Lower leg skin (tissue), 4 donors: ENCODE measurements at regions of chr6 and their contacts with region 1.

Region 1: DNA sequence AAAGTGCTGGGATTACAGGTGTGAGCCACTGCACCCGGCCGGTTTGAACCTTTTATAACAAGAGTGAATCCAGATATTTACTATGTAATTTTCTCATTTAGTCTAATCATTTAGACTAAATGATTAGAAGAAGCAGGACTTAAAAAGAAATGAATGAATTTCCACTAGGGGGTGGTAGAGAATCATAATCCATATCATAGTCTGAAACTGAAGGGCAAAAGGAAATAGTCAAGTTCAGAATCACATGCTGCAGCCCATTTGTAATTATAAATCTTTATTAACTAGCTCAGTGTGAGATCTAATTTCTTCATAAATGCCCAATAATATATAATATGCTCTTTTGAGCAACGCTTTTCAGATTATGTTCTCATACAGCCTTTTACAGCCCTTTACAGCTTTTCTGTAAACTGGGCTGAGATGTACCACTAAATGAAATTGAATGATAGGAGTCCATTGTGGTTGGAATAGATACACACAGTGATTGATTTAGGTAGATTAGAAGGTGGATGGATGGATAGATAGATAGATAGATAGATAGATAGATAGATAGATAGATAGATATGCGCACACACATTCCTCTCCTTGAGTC is 31.8 kb downstream of the PSMB9 start:
- DNase-seq: no peak
- H3K4me3 ChIP-seq: no peak overlapping the region
- CTCF ChIP-seq: no peak
- POLR2A ChIP-seq: no peak

Region 2: DNA sequence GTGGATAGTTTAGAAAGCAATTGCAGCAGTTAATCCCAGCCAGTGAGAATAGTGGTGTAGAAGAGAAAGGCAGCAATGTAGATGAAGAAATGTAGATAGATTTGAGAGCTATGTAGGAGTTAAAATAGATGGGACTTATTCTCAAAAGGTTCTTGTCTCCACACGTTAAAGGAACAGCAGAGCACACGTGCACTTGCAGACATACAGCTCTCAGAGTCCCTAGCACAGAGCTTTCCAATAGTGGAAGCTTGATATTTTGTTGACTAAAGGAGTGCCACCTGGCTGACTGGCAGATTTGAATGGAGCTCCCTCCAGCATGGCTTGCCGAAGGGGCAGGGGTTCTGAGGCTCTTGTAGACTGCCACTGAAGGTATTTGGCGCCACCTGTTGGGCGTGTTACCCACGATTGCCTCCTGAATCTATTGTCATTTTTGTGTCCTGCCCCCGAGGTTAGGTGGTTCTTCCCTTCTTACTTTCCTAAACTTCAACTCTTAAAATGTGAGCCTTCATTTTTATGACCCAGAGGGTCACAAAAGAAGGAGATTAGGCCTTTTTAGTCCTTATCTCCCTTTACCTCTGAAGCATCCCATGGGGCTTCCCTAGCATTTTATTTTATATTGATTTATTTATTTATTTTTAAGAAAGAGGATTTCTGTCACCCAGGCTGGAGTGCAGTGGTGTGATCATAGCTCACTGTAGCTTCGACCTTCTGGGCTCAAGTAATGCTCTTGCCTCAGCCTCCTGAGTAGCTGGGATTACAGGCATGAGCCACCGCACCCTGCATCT is 99.0 kb after region 1 on chr6:
- intact Hi-C with region 1: loop called (anchors 10 kb)
- DNase-seq: peak; percentile 88 to 98
- H3K4me3 ChIP-seq: no peak overlapping the region
- CTCF ChIP-seq: peak in 1 of 3 donors; percentile 79
- POLR2A ChIP-seq: no peak